PC-3 (cell line): ENCODE measurements at regions of chr2 and their contacts with region 1.

Region 1: DNA sequence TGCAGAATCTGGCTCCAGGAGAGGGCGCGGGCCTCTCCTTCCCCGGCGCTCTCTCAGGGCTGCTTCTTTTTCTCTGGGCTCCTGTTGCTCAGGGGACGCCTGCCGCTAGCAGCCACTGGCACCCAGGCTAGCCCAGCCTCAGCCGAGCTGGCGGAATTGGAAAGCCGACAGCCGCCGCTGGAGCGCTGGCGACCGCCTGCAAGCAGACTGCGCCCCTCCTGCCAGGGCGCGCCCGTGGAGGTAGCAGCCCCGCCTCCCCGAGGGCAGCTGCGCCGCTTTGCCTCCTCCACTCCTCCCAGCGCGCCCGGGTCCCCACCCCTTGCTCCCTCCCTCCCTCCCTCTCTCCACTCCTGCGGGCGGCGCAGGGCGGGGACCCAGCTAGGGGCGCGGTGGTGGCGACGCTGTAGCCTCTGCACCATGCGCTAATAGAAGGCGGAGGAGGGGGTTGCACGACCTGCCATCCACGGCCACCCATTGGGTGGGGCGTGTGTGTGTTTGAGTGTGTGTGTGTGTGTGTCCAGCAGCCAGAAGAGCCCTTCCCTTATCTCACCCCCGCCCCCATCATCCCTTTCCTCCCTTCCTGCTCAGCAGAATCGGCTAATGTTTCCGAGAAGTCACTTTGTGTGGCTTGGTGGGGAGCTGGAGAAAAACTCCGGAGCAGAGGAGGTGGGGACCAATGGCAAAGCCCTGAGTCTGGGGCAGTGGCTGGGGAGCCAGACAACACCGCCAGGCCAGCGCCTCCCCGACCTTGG is at the start of gene SCN9A:
- DNase-seq: peak; percentile 92
- ATAC-seq: peak; percentile 90
- H3K4me3 ChIP-seq: peak within 1 kb of the TSS; percentile 79
- H3K27ac ChIP-seq: no peak within 1 kb of the TSS
- H3K4me1 ChIP-seq: peaks cover 14% of the 10 kb centered on the region
- H3K27me3 ChIP-seq: peaks cover 6% of the 10 kb centered on the region; the same call in 1 of the 2 replicates
- CTCF ChIP-seq: peak; percentile 50
- total RNA-seq, gene SCN9A: 3.4 and 7.0 TPM in 2 replicates

Region 2: GRCh38 chr2:166211079-166211478 is 164.8 kb before region 1 on chr2:
- CTCF ChIA-PET with region 1: no interaction called
- POLR2A ChIA-PET with region 1: interaction called, 10 read pairs
- intact Hi-C with region 1: no loop called
- DNase-seq: no peak
- ATAC-seq: no peak
- H3K4me3 ChIP-seq: no peak overlapping the region
- H3K27ac ChIP-seq: no peak overlapping the region
- H3K4me1 ChIP-seq: no peaks in the 10 kb centered on the region
- H3K27me3 ChIP-seq: no peaks in the 10 kb centered on the region
- CTCF ChIP-seq: no peak

Region 3: DNA sequence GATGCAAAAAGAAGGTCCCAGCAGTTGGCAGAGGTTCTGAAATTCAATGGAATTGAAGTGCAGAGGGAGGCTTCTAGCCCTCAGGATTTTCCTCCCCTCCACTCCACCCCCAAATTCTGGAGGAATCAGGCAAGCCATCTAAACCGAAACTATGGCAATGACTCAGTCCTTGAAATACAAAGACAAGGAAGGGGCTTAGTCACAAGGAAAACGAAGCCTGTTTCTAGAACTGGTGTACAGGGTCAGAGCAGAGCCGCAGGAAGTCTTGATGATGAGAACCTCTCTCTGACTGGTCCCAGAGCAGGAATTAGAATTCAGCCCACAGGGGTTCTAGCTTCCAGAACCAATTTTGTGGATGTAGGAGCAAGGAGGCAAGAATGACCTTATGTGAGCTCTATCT is 136.4 kb before region 1 on chr2:
- CTCF ChIA-PET with region 1: no interaction called
- POLR2A ChIA-PET with region 1: no interaction called
- intact Hi-C with region 1: loop called (anchors 5 kb)
- DNase-seq: peak; percentile 99
- ATAC-seq: peak; percentile 98
- H3K4me3 ChIP-seq: peak overlapping the region; percentile 19; the same call in 1 of the 2 replicates
- H3K27ac ChIP-seq: peak overlapping the region; percentile 94
- H3K4me1 ChIP-seq: peaks cover 42% of the 10 kb centered on the region
- H3K27me3 ChIP-seq: no peaks in the 10 kb centered on the region
- CTCF ChIP-seq: no peak

Region 4: DNA sequence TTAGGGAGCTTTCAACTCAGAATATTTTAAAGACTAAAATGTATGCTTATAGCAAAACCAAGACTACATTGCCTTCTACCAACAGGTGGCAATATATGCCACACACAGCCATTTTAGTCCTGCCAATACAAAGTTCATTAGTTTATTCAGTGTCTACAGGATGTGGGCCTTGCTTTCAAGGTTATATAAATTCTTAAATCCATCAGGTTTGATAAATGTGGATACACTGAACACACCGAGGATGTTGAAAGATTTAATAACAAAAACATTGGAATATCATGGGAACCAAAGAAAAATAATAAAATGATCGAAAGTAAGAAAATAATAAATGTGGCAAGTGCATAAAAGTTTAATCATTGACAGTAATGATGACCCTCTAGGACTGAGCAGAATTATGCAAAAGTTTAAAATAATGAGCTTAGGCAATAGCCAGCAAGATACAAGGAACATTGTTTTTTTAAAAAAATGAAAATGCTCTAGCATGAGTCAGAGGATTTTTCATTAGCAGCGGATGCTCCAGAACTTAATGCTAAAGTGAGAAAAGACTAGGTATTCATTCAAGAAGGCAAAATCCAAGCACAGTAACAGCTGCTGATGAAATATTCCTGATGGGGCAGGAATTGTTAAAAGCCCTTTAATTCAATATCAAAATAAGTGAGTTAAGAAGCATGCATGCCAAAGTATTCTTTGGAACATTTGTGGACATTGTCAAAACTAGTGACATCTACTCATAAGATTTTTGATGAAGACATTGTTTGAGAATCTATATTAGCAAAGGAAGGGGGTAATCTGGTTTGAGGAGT is 14.4 kb before region 1 on chr2:
- CTCF ChIA-PET with region 1: interaction called, 14 read pairs
- POLR2A ChIA-PET with region 1: no interaction called
- intact Hi-C with region 1: no loop called
- DNase-seq: peak; percentile 73
- ATAC-seq: peak; percentile 93
- H3K4me3 ChIP-seq: no peak overlapping the region
- H3K27ac ChIP-seq: no peak overlapping the region
- H3K4me1 ChIP-seq: peaks cover 12% of the 10 kb centered on the region
- H3K27me3 ChIP-seq: no peaks in the 10 kb centered on the region
- CTCF ChIP-seq: peak; percentile 95

Region 5: GRCh38 chr2:166404831-166405568 is 29.1 kb after region 1 on chr2:
- CTCF ChIA-PET with region 1: no interaction called
- POLR2A ChIA-PET with region 1: no interaction called
- intact Hi-C with region 1: no loop called
- DNase-seq: no peak
- ATAC-seq: no peak
- H3K4me3 ChIP-seq: no peak overlapping the region
- H3K27ac ChIP-seq: no peak overlapping the region
- H3K4me1 ChIP-seq: no peaks in the 10 kb centered on the region
- H3K27me3 ChIP-seq: peaks cover 7% of the 10 kb centered on the region; the same call in 1 of the 2 replicates
- CTCF ChIP-seq: no peak